HEK293 (cell line): ENCODE measurements at regions of chr10 and their contacts with region 1.

Region 1: GRCh38 chr10:80924063-80924952 is 386.6 kb downstream of the SH2D4B start:
- H3K4me3 ChIP-seq: no peak overlapping the region
- H3K27ac ChIP-seq: no peak overlapping the region
- H3K4me1 ChIP-seq: no peaks in the 10 kb centered on the region
- CTCF ChIP-seq: no peak

Region 2: GRCh38 chr10:80900661-80901060 is 23.6 kb before region 1 on chr10:
- CTCF ChIA-PET with region 1: interaction called, 12 read pairs
- POLR2A ChIA-PET with region 1: no interaction called
- H3K4me3 ChIP-seq: no peak overlapping the region
- H3K27ac ChIP-seq: no peak overlapping the region
- H3K4me1 ChIP-seq: no peaks in the 10 kb centered on the region
- CTCF ChIP-seq: no peak